Posterior cingulate gyrus (tissue), 11 donors: ENCODE measurements at regions of chr11 and their contacts with region 1.

Region 1: DNA sequence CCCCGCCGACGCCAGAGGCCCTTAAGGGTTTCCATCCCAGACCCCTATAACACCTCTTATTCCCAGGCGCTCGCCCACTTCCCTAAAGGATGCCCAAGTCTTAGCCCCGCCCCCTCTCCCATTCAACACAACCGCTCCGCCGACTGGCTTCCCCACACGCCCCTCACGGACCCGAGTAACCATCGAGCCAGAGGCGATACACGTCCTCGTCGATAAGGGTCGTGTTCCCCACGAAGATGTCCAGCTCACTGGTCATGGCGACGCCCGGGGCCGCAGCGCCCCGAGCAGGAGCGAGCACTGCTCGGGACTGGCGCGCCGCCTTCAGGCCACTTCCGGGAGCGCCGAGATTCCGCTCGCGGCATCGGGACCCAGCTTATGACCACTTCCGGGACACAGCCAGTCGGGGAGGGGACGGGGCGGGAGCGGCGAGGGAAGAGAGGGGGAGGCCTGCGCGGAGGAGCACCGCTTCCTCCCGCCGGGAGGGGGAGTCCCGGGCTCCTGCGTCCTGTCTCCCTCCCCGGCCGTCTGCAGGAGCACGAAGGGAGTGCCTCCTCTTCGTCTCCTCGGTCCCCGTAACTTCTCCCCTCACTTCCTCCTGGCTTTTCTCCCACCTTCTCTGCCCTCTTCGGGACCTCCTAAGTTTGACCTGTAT is at the start of gene FIBP:
- DNase-seq: peak; percentile 96 to 99 (median 98)

Region 2: GRCh38 chr11:65425105-65425970 is 463.0 kb before region 1 on chr11:
- intact Hi-C with region 1: no loop called
- DNase-seq: peak in 3 of 10 donors; percentile 22 to 78 (median 36)

Region 3: GRCh38 chr11:65859200-65859811 is 29.0 kb before region 1 on chr11:
- intact Hi-C with region 1: loop called (anchors 2 kb)
- DNase-seq: peak; percentile 90 to 100 (median 97)

Region 4: GRCh38 chr11:65919146-65920033 is 31.1 kb after region 1 on chr11 and contains the start of gene DRAP1:
- intact Hi-C with region 1: loop called (anchors 1 kb)
- DNase-seq: peak; percentile 98 to 100 (median 100)

Region 5: GRCh38 chr11:65961232-65961901 is 73.1 kb after region 1 on chr11 and contains the start of gene SART1:
- intact Hi-C with region 1: loop called (anchors 5 kb)
- DNase-seq: peak; percentile 96 to 99 (median 97)

Region 6: DNA sequence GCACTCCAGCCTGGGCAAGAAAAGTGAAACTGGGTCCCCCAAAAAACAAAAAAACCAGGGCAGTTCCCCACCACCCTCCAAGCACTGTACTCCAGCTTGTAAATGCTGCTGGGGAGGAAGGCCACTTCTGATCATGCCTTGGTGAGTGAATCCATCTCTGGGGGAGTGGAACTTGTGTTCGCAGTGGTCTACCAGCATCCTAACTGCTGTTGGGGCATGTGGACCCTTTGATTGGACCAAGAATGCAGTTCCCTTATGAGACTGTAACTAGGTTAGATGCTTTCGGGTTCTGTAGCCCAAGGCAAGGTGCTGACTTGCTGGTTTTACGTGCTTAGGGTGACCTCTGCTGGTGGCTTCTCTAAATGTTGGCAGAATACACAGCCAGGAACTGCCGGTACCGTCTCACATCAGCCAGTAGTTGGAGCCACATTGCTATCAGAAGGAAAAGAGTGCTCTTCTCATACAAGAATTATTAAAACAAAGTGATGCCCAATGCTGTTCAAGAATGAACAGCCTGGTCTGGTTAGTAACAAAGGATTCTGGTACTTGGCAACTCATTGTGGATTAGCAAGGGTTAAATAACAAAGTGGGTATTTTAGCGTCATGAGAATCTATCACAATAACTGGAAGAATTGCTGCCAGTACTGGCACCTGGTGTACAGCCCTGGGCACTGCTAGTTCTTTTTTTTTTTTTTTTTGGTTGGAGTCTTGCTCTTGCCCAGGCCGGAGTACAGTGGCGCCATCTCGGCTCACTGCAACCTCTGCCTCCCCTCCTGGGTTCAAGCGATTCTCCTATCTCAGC is 100.7 kb after region 1 on chr11:
- intact Hi-C with region 1: loop called (anchors 2 kb)
- DNase-seq: peak; percentile 62 to 97 (median 87)